ENCODE measurements at regions of chr7 and their contacts with region 1.

Region 1: DNA sequence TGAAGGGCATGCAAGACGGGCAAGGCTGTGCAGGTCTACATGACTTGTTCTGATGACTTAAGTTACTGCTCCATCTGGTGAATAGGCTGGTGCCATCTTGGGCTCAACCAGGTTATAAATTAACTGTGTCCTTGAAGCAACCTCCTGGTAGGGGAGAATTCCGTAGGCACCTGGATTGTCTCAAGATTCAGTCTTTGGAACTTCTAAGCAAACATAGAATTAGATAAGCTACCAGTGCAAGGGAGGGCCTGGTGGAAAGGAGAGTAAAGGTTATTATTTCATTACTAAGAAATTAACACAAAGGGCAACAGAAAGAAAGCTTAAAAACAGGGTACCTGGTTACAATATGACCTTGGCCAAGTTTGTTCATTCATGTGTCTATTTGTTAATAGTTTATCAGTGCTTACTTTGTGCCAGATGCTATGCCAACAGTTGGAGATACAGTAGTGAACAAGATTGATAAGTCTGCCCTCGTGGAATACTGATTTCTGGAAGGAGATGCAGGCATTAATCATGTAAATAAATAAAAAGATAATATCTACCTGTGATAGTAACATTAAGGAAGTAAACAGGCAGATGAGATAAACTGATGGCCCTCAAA is 107.0 kb upstream of the PALS2 start:
- DNase-seq: peak; percentile 26 to 54
- H3K4me3 ChIP-seq: no peak overlapping the region
- H3K4me3 Mint-ChIP-seq: no peak overlapping the region
- H3K27ac Mint-ChIP-seq: no peak overlapping the region
- H3K4me1 ChIP-seq: peaks cover 33% of the 10 kb centered on the region
- H3K4me1 Mint-ChIP-seq: peaks cover 21% of the 10 kb centered on the region
- H3K27me3 ChIP-seq: no peaks in the 10 kb centered on the region
- H3K27me3 Mint-ChIP-seq: no peaks in the 10 kb centered on the region
- CTCF ChIP-seq: no peak

Region 2: DNA sequence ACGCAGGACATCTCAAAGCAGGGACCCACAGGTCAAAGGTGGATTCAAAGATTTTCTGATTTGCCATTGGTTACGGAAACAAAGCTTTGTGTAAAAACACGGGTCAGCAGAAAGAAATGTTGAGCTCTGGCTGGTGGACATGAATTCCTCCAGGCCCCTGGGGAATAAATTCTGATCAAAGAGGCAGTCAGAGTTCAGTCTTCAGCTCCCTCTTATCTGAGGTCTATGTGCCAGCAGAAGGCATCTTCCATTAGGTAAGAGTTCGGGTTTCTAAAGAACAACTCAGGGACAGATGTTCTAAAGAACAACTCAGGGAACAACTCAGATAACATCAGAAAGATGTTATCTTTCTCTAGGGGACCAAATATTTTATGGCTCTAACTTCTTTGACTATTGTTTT is 42.0 kb after region 1 on chr7:
- CTCF ChIA-PET with region 1: no interaction called
- POLR2A ChIA-PET with region 1: no interaction called
- intact Hi-C with region 1: loop called (anchors 2 kb)
- DNase-seq: peak; percentile 77 to 84
- H3K4me3 ChIP-seq: no peak overlapping the region
- H3K4me3 Mint-ChIP-seq: peak overlapping the region; percentile 22
- H3K27ac Mint-ChIP-seq: peak overlapping the region; percentile 43
- H3K4me1 ChIP-seq: peaks cover 52% of the 10 kb centered on the region
- H3K4me1 Mint-ChIP-seq: peaks cover 47% of the 10 kb centered on the region
- H3K27me3 ChIP-seq: no peaks in the 10 kb centered on the region
- H3K27me3 Mint-ChIP-seq: no peaks in the 10 kb centered on the region
- CTCF ChIP-seq: no peak

Region 3: GRCh38 chr7:24769014-24769830 is 303.0 kb after region 1 on chr7:
- CTCF ChIA-PET with region 1: no interaction called
- POLR2A ChIA-PET with region 1: no interaction called
- intact Hi-C with region 1: no loop called
- DNase-seq: no peak
- H3K4me3 ChIP-seq: no peak overlapping the region
- H3K4me3 Mint-ChIP-seq: no peak overlapping the region
- H3K27ac Mint-ChIP-seq: no peak overlapping the region
- H3K4me1 ChIP-seq: no peaks in the 10 kb centered on the region
- H3K4me1 Mint-ChIP-seq: peaks cover 5% of the 10 kb centered on the region
- H3K27me3 ChIP-seq: no peaks in the 10 kb centered on the region
- H3K27me3 Mint-ChIP-seq: peaks cover 4% of the 10 kb centered on the region
- CTCF ChIP-seq: no peak